H1 (cell line): ENCODE measurements at regions of chr17 and their contacts with region 1.

Region 1: DNA sequence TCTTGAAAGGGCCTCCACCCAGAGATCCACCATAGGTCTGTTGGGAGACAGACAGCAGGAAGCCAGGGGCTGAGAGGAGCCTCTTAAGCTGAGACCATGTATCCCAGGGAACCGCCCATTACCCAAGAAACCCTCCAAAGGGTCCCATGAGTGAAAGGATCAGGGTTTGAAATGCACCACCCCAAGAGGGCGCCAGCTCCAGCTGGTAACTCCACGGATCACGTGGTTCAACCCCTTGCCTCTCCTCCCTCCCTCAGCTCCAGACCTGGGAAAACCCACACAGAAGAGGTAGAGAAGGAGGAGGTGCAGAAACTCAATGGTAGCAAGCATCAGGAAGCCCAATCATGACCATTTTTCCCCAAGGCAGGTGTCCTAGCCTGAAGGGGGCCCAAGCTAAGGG is 148.7 kb downstream of the AIPL1 start:
- DNase-seq: peak; percentile 23 to 66
- H3K4me3 ChIP-seq: no peak overlapping the region
- H3K27ac ChIP-seq: no peak overlapping the region
- H3K4me1 ChIP-seq: no peaks in the 10 kb centered on the region
- H3K27me3 ChIP-seq: no peaks in the 10 kb centered on the region
- CTCF ChIP-seq: peak; percentile 58 to 66 (median 66)
- EP300 ChIP-seq: no peak
- POLR2A ChIP-seq: no peak
- RAD21 ChIP-seq: peak; percentile 44 to 63; a peak in 3 of 4 replicates

Region 2: GRCh38 chr17:6413065-6413464 is 126.8 kb after region 1 on chr17:
- CTCF ChIA-PET with region 1: interaction called, 12 read pairs
- POLR2A ChIA-PET with region 1: no interaction called
- DNase-seq: no peak
- H3K4me3 ChIP-seq: no peak overlapping the region
- H3K27ac ChIP-seq: no peak overlapping the region
- H3K4me1 ChIP-seq: no peaks in the 10 kb centered on the region
- H3K27me3 ChIP-seq: no peaks in the 10 kb centered on the region
- CTCF ChIP-seq: peak in 2 of 3 experiments; percentile 53 to 74; a peak in 3 of 4 replicates
- EP300 ChIP-seq: no peak
- POLR2A ChIP-seq: no peak
- RAD21 ChIP-seq: peak; percentile 85 to 86

Region 3: DNA sequence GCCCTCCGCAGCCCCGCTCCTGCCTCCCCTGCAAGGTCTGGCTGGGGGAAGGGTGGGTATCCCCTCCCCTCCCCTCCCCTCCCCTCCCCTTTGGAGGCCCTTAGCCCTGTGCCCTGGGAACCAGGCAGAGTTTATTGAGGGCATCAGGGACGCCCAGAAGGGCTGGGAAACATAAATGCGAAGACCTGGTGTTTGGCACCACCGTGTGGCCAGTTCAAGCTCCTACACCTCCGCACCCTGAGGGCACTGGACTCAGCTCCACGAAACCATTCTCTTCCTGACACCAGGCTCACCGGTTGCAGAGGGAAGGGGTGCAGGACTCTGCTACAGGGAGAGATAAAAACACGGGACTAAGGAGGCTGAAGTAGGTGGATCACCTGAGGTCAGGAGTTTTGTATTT is 149.7 kb after region 1 on chr17:
- CTCF ChIA-PET with region 1: interaction called, 12 read pairs
- POLR2A ChIA-PET with region 1: no interaction called
- DNase-seq: peak in 1 of 2 experiments; percentile 81
- H3K4me3 ChIP-seq: no peak overlapping the region
- H3K27ac ChIP-seq: no peak overlapping the region
- H3K4me1 ChIP-seq: peaks cover 2 to 21% (median 6%) of the 10 kb centered on the region in 4 experiments
- H3K27me3 ChIP-seq: no peaks in the 10 kb centered on the region
- CTCF ChIP-seq: peak; percentile 79 to 90 (median 89)
- EP300 ChIP-seq: no peak
- POLR2A ChIP-seq: no peak
- RAD21 ChIP-seq: peak; percentile 92 to 93